ENCODE measurements at regions of chr4 and their contacts with region 1.

Region 1: DNA sequence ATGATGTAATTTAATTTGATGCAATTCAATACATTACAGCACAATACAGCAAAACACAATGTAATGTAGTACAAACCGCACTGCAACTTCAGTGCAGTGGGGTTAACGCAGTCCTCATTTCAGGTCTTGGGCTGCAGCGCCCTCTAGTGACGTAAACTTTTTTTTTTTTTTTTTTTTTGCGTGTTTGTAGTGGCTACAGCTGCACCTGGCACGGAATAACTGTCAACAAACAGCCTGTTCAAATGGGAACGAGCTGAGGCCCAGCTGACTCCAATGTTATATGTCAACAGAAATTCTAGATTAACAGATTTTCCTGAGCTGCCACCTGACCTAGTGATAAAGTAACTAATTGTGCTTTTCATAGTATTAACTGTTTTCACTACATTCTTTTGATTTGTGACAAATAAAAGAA is 33.5 kb upstream of the RASSF6 start:
- DNase-seq: no peak
- ATAC-seq: no peak
- H3K4me3 ChIP-seq: no peak overlapping the region
- H3K27ac ChIP-seq: no peak overlapping the region
- H3K4me1 ChIP-seq: peaks cover 2% of the 10 kb centered on the region; the same call in 1 of the 2 replicates
- H3K27me3 ChIP-seq: no peaks in the 10 kb centered on the region
- CTCF ChIP-seq: peak; percentile 65

Region 2: DNA sequence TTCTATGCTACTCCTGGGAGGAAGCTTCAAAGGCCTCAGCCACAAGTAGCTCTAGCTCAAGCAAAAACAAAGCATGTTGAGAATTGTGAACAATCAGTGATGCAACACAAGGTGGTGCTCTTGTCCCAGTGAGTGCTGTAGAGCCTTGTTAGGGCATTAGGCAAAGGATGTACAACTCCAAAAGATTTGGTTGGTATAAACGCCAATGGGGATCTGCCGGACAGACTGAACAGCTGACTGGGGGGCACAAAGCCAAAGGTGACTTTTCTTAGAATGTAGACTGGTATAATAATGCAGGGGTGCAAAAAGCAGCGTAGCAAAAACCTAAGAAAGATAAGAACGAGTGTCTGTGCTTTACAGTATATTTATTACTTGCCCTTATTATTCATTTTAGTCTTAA is 312.2 kb before region 1 on chr4:
- CTCF ChIA-PET with region 1: interaction called, 3 read pairs
- POLR2A ChIA-PET with region 1: no interaction called
- in situ Hi-C with region 1: no loop called
- intact Hi-C with region 1: loop called (anchors 10 kb)
- DNase-seq: peak; percentile 35
- ATAC-seq: peak; percentile 79; the same call in 1 of the 2 replicates
- H3K4me3 ChIP-seq: no peak overlapping the region
- H3K27ac ChIP-seq: no peak overlapping the region
- H3K4me1 ChIP-seq: no peaks in the 10 kb centered on the region
- H3K27me3 ChIP-seq: no peaks in the 10 kb centered on the region
- CTCF ChIP-seq: peak; percentile 64

Measured in Panc1 (cell line).